ENCODE measurements at regions of chr1 and their contacts with region 1.

Region 1: GRCh38 chr1:23577056-23578004 is 18.0 kb upstream of the ID3 start:
- DNase-seq: peak; percentile 68
- H3K4me3 Mint-ChIP-seq: peak overlapping the region; percentile 23
- H3K27ac Mint-ChIP-seq: peak overlapping the region; percentile 94
- H3K4me1 Mint-ChIP-seq: peaks cover 52% of the 10 kb centered on the region
- H3K27me3 Mint-ChIP-seq: peaks cover 16% of the 10 kb centered on the region

Region 2: GRCh38 chr1:23456226-23456625 is 121.1 kb before region 1 on chr1:
- CTCF ChIA-PET with region 1: no interaction called
- DNase-seq: no peak
- H3K4me3 Mint-ChIP-seq: no peak overlapping the region
- H3K27ac Mint-ChIP-seq: no peak overlapping the region
- H3K4me1 Mint-ChIP-seq: peaks cover 21% of the 10 kb centered on the region
- H3K27me3 Mint-ChIP-seq: peaks cover 67% of the 10 kb centered on the region

Region 3: DNA sequence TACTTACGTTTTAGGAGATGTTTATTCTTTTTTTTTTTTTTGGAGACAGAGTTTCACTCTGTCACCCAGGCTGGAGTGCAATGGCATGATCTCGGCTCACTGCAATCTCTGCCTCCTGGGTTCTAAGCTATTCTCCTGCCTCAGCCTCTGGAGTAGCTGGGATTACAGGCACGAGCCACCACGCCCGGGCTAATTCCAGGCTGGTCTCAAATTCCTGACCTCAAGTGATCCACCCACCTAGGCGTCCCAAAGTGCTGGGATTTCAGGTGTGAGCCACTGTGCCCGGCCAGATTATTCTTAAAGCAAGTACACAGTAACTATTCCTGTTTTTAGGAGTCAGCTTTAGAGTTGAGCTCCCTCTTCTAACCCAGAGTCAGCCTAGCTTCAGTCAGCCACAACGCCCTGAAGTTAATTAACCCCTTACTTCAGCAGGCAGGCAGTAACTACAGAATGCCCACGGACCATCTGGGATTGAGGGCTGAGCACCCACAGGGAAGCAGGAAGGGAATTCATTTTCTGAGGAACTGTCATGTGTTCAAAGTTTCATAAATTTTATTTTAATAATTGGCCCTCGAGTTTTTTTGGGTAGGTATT is 12.7 kb before region 1 on chr1:
- CTCF ChIA-PET with region 1: interaction called, 16 read pairs
- DNase-seq: no peak
- H3K4me3 Mint-ChIP-seq: no peak overlapping the region
- H3K27ac Mint-ChIP-seq: no peak overlapping the region
- H3K4me1 Mint-ChIP-seq: peaks cover 48% of the 10 kb centered on the region
- H3K27me3 Mint-ChIP-seq: peaks cover 98% of the 10 kb centered on the region

Region 4: GRCh38 chr1:23613191-23614031 is 36.1 kb after region 1 on chr1:
- CTCF ChIA-PET with region 1: interaction called, 10 read pairs
- DNase-seq: peak; percentile 83
- H3K4me3 Mint-ChIP-seq: peak overlapping the region; percentile 37
- H3K27ac Mint-ChIP-seq: peak overlapping the region; percentile 98
- H3K4me1 Mint-ChIP-seq: peaks cover 78% of the 10 kb centered on the region
- H3K27me3 Mint-ChIP-seq: peaks cover 1% of the 10 kb centered on the region

Measured in activated naive CD4-positive, alpha-beta T cell treated with anti-CD3 and anti-CD28 coated beads, Interleukin-2, amount 10 ng/mL, durations not matched to agents 7 days and 5 days (primary cell).